Prostate gland (tissue), 2 donors: ENCODE measurements at regions of chr10 and their contacts with region 1.

Region 1: GRCh38 chr10:122044045-122044661 is 55.2 kb downstream of the TACC2 start:
- DNase-seq: no peak
- H3K4me3 ChIP-seq: no peak overlapping the region
- H3K27ac ChIP-seq: peak overlapping the region; percentile 79 to 81
- H3K4me1 ChIP-seq: peaks cover 9% of the 10 kb centered on the region
- H3K27me3 ChIP-seq: no peaks in the 10 kb centered on the region
- CTCF ChIP-seq: no peak
- POLR2A ChIP-seq: no peak

Region 2: GRCh38 chr10:121813211-121813815 is 230.8 kb before region 1 on chr10:
- intact Hi-C with region 1: no loop called
- DNase-seq: no peak
- H3K4me3 ChIP-seq: no peak overlapping the region
- H3K27ac ChIP-seq: no peak overlapping the region
- H3K4me1 ChIP-seq: no peaks in the 10 kb centered on the region
- H3K27me3 ChIP-seq: no peaks in the 10 kb centered on the region
- CTCF ChIP-seq: no peak
- POLR2A ChIP-seq: no peak

Region 3: DNA sequence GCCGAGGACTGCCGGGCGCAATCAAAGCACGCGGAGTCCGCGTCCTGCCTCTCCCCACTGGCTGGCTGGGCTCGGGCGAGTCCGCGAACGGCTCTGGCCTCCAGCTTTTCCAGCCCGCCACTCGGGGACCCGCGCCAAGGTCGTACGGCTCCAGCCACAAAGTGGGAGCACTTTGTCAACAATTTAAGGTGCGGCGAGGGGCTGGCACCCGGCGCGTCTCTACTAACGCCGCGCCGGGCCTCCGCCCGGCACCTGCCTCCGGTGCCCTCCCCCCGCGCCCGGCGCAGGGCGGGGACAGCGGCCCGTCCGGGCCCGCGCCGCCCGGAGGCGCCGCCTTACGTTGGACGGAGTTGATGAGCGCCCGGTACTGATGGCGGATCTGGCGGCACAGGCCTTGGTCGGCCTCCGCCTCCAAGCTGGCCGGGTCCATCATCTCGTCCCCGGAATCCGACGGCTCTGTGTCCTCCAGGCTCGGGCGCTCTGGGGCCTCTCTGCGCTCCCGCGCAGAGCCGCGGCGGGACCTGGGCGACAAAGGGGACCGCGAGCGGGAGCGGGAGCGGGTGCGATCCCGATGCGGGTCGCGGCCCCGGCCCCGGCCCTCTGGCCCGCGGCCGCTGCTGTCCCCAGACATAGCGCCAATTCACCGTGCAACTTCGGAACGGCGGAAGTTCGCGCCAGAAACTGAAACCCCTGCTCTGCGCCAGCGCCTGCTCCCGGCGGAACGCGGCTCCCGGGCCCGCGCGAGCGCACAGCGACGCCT is 69.4 kb before region 1 on chr10 and contains the start of gene NSMCE4A:
- intact Hi-C with region 1: loop called (anchors 5 kb)
- DNase-seq: peak; percentile 70
- H3K4me3 ChIP-seq: peak within 1 kb of the TSS; percentile 78 to 94
- H3K27ac ChIP-seq: peak within 1 kb of the TSS; percentile 99
- H3K4me1 ChIP-seq: no peaks in the 10 kb centered on the region
- H3K27me3 ChIP-seq: no peaks in the 10 kb centered on the region
- CTCF ChIP-seq: peak in 3 of 4 experiments; percentile 56 to 81 (median 78)
- POLR2A ChIP-seq: peak; percentile 43
- total RNA-seq, gene NSMCE4A: 90.1 to 105 TPM

Region 4: DNA sequence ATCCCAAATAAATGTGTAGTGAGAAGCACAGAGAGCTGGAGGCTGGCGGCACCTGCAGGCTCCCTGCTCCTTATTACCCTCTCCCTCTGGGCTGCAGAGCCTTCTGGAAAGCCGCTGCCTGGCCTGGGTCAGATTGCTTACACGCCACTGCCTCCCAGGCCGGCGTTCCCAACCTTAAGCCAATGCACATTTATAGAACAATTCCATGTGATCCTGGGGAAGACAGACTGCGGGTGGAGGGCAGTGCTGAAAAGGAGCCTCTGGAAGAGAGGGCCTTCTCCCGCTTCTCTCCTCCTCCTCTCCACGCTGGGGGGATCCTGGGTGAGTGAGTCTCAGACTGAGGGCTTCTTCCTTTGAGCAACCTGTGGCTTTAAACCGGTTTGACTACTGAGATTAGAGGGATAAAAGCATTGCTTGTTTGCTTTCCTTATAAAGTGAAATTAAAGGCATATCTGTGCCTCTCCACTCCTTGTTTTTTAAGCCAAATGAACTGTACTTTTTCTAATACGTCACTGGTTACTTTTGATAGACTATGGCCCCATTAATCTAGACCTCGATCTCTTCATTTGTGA is 49.7 kb before region 1 on chr10:
- intact Hi-C with region 1: loop called (anchors 1 kb)
- DNase-seq: peak; percentile 79
- H3K4me3 ChIP-seq: peak overlapping the region in 1 of 2 donors; percentile 19
- H3K27ac ChIP-seq: peak overlapping the region; percentile 90 to 95
- H3K4me1 ChIP-seq: peaks cover 11% of the 10 kb centered on the region
- H3K27me3 ChIP-seq: no peaks in the 10 kb centered on the region
- CTCF ChIP-seq: peak in 2 of 4 experiments; percentile 31 to 32
- POLR2A ChIP-seq: no peak

Region 5: GRCh38 chr10:123187781-123188180 is 1143.6 kb after region 1 on chr10:
- intact Hi-C with region 1: no loop called
- DNase-seq: no peak
- H3K4me3 ChIP-seq: no peak overlapping the region
- H3K27ac ChIP-seq: no peak overlapping the region
- H3K4me1 ChIP-seq: no peaks in the 10 kb centered on the region
- H3K27me3 ChIP-seq: no peaks in the 10 kb centered on the region
- CTCF ChIP-seq: no peak
- POLR2A ChIP-seq: no peak